ENCODE measurements at regions of chr12 and their contacts with region 1.

Region 1: DNA sequence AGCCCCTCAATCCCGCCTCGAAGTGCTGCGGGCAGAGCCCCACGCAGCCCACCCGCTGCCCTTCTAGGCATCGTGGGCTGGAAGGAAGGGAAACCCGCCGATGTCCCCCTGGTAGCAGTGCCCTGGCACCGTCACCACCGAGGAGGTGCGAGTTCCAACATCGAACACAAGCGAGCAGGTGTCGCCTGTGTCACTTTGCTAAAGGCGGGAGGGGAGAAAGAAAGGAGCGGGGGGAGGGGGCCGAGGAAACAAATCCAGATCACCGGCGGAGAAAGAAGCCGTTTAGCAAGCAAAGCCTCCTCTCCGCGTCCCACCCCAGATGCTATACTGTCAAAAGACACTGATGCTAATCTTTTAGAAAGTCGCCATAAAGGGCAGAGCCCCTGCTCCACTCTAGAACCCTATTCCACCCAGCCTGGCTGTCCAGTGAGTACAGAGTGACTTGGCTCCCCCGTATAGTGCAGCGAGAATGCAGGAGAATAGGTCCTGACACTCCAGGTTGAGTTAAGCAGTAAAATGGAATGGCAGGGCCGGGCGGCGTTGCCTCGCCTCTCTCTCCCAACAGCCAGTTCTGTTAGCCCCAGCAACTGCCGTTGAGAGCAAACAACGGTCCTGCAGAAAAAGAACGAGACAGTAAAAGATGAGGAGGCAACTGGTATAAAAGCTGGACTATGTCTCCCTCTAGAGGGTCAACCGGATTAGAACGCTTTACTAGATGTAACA is 67.9 kb upstream of the USP15 start:
- DNase-seq: peak in 8 of 9 experiments; percentile 4 to 79 (median 40)
- ATAC-seq: peak; percentile 85
- H3K4me3 ChIP-seq: peak overlapping the region; percentile 34 to 65
- H3K4me3 Mint-ChIP-seq: peak overlapping the region; percentile 82
- H3K27ac ChIP-seq: no peak overlapping the region
- H3K27ac Mint-ChIP-seq: no peak overlapping the region
- H3K4me1 ChIP-seq: peaks cover 21% of the 10 kb centered on the region
- H3K4me1 Mint-ChIP-seq: peaks cover 26% of the 10 kb centered on the region
- H3K27me3 ChIP-seq: peaks cover 15 to 18% of the 10 kb centered on the region in 2 experiments
- H3K27me3 Mint-ChIP-seq: peaks cover 33% of the 10 kb centered on the region
- CTCF ChIP-seq: peak; percentile 85

Region 2: DNA sequence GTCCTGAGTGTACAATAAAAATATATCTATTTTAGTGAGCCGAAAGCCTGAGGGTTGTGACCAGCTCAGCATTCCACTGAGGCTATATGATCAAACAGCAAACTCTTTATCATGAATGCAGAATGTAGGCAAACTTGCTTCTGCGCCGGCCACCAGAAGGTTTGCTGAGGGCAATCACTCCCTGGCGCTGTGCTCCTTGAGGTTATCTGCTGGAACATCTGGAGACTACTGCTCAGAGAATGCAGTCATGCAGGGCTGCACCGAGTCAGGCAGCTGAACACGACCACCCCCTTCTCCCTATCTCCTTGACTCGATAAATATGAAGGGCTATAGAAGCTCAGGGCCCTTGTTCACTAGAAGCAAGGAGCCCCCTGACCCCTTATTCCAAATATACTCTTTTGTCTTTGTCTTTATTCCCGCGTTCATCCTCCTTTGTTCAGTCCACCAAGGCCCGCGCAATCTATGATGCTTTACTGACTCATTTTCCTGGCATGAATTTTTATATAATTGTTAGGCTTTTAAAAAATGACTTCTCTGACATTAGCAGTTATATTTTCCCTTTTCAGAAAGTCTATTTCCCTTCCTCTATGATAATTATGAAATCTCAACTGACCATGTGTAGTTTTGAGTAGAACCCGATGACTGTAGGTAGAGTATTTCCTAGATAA is 1507.2 kb before region 1 on chr12:
- CTCF ChIA-PET with region 1: no interaction called
- POLR2A ChIA-PET with region 1: no interaction called
- intact Hi-C with region 1: loop called in 1 of 2 experiments (anchors 5 kb)
- DNase-seq: no peak
- ATAC-seq: no peak
- H3K4me3 ChIP-seq: no peak overlapping the region
- H3K4me3 Mint-ChIP-seq: no peak overlapping the region
- H3K27ac ChIP-seq: no peak overlapping the region
- H3K27ac Mint-ChIP-seq: no peak overlapping the region
- H3K4me1 ChIP-seq: no peaks in the 10 kb centered on the region
- H3K4me1 Mint-ChIP-seq: no peaks in the 10 kb centered on the region
- H3K27me3 ChIP-seq: no peaks in the 10 kb centered on the region
- H3K27me3 Mint-ChIP-seq: no peaks in the 10 kb centered on the region
- CTCF ChIP-seq: no peak

Region 3: GRCh38 chr12:62006076-62006732 is 186.1 kb before region 1 on chr12:
- CTCF ChIA-PET with region 1: no interaction called
- POLR2A ChIA-PET with region 1: no interaction called
- intact Hi-C with region 1: loop called (anchors 1 to 10 kb)
- DNase-seq: peak in 3 of 9 experiments; percentile 18 to 37 (median 25)
- ATAC-seq: no peak
- H3K4me3 ChIP-seq: no peak overlapping the region
- H3K4me3 Mint-ChIP-seq: no peak overlapping the region
- H3K27ac ChIP-seq: no peak overlapping the region
- H3K27ac Mint-ChIP-seq: no peak overlapping the region
- H3K4me1 ChIP-seq: no peaks in the 10 kb centered on the region
- H3K4me1 Mint-ChIP-seq: no peaks in the 10 kb centered on the region
- H3K27me3 ChIP-seq: no peaks in the 10 kb centered on the region
- H3K27me3 Mint-ChIP-seq: peaks cover 2% of the 10 kb centered on the region
- CTCF ChIP-seq: peak; percentile 69

Region 4: DNA sequence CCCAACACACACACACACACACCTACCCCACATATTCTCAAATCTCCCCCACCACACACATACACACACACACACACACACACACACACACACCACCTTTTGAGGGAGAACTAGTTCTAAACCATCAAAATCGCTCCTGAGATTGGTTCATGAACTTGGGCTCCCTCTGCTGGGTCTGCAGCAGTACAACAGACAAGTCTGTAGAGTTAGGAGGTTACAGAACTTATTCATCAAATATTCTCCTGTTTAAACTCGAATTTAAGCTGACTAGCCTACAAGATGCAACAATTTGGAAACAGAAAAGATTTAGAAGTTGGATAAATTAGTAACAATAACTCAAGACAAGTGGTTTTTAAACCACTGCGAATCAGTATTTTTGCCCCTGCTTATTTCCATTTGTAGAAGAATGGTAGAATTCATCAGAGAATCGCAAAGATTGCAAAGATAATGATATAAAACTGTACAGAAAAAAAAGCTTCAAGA is 68.6 kb before region 1 on chr12:
- CTCF ChIA-PET with region 1: no interaction called
- POLR2A ChIA-PET with region 1: no interaction called
- intact Hi-C with region 1: loop called (anchors 2 to 5 kb)
- DNase-seq: peak in 7 of 9 experiments; percentile 1 to 58 (median 35)
- ATAC-seq: peak; percentile 69
- H3K4me3 ChIP-seq: no peak overlapping the region
- H3K4me3 Mint-ChIP-seq: no peak overlapping the region
- H3K27ac ChIP-seq: no peak overlapping the region
- H3K27ac Mint-ChIP-seq: no peak overlapping the region
- H3K4me1 ChIP-seq: no peaks in the 10 kb centered on the region
- H3K4me1 Mint-ChIP-seq: peaks cover 2% of the 10 kb centered on the region
- H3K27me3 ChIP-seq: no peaks in the 10 kb centered on the region
- H3K27me3 Mint-ChIP-seq: peaks cover 5% of the 10 kb centered on the region
- CTCF ChIP-seq: peak; percentile 60

Region 5: DNA sequence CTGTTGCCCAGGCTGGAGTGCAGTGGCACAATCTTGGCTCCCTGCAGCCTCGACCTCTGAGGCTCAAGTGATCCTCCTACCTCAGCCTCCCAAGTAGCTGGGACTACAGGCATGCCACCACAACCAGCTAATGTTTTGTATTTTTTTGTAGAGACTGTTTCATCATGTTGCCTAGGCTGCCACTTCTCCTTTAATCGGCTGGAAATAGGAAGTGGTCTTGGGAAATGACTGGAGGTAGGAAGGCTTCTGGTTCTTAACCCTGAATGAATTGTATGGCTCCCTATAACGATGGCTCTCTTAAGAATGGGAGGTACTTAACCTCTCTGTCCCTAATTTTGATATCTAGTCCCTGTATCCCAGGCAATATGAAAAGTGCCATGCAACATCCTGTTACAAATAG is 46.0 kb before region 1 on chr12:
- CTCF ChIA-PET with region 1: no interaction called
- POLR2A ChIA-PET with region 1: no interaction called
- intact Hi-C with region 1: no loop called
- DNase-seq: no peak
- ATAC-seq: no peak
- H3K4me3 ChIP-seq: no peak overlapping the region
- H3K4me3 Mint-ChIP-seq: no peak overlapping the region
- H3K27ac ChIP-seq: no peak overlapping the region
- H3K27ac Mint-ChIP-seq: no peak overlapping the region
- H3K4me1 ChIP-seq: no peaks in the 10 kb centered on the region
- H3K4me1 Mint-ChIP-seq: no peaks in the 10 kb centered on the region
- H3K27me3 ChIP-seq: no peaks in the 10 kb centered on the region
- H3K27me3 Mint-ChIP-seq: no peaks in the 10 kb centered on the region
- CTCF ChIP-seq: no peak

Region 6: DNA sequence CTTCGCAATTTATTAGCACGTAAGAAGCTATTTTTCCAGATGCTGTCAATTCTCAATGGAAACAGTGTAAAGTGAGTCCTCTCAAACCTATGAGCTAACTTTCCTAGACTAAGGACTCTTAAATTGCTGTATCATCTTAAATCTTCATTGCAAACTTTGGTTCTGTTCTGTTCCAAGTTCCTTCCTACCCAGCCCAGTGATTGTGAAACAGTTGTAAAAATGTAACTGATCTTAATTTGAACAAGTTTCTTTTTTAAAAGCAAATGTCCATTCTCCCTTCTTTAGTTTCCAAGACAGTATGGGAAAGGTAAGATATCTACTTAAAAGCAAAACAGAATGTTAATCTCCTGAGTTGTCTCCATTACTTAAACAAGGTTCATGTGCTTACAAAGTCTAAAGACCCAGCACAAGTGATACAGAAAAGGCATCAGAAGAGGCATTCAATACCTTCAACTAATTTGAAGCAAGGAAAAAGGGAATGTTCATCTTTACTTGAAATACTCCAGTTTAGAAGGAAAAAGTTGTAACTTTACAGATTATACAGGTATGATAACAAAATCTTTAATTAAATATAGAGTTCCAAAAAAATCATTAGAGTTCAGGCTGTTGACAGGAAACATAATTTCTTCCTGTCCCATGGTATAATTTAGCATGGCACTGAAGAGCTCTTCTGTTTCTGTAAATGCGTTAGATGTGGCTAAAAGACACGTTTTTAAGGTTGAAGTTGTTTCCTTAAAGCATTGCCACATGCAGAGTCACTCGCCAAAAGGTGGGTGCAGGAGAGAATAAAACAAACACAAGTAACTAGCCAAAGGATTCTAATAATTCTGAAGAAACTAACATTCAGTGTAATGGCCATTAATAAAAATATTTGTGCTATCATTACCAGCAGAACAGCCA is 33.6 kb before region 1 on chr12:
- CTCF ChIA-PET with region 1: interaction called, 3 read pairs
- POLR2A ChIA-PET with region 1: no interaction called
- intact Hi-C with region 1: loop called in 1 of 2 experiments (anchors 5 kb)
- DNase-seq: peak in 3 of 9 experiments; percentile 17 to 52 (median 22)
- ATAC-seq: peak; percentile 85
- H3K4me3 ChIP-seq: no peak overlapping the region
- H3K4me3 Mint-ChIP-seq: peak overlapping the region; percentile 54
- H3K27ac ChIP-seq: no peak overlapping the region
- H3K27ac Mint-ChIP-seq: peak overlapping the region; percentile 53
- H3K4me1 ChIP-seq: peaks cover 18% of the 10 kb centered on the region
- H3K4me1 Mint-ChIP-seq: peaks cover 39% of the 10 kb centered on the region
- H3K27me3 ChIP-seq: no peaks in the 10 kb centered on the region
- H3K27me3 Mint-ChIP-seq: no peaks in the 10 kb centered on the region
- CTCF ChIP-seq: no peak

Region 7: GRCh38 chr12:62205346-62205745 is 13.0 kb after region 1 on chr12:
- CTCF ChIA-PET with region 1: interaction called, 16 read pairs
- POLR2A ChIA-PET with region 1: no interaction called
- intact Hi-C with region 1: no loop called
- DNase-seq: no peak
- ATAC-seq: no peak
- H3K4me3 ChIP-seq: no peak overlapping the region
- H3K4me3 Mint-ChIP-seq: no peak overlapping the region
- H3K27ac ChIP-seq: no peak overlapping the region
- H3K27ac Mint-ChIP-seq: no peak overlapping the region
- H3K4me1 ChIP-seq: no peaks in the 10 kb centered on the region
- H3K4me1 Mint-ChIP-seq: no peaks in the 10 kb centered on the region
- H3K27me3 ChIP-seq: no peaks in the 10 kb centered on the region
- H3K27me3 Mint-ChIP-seq: no peaks in the 10 kb centered on the region
- CTCF ChIP-seq: no peak

Region 8: DNA sequence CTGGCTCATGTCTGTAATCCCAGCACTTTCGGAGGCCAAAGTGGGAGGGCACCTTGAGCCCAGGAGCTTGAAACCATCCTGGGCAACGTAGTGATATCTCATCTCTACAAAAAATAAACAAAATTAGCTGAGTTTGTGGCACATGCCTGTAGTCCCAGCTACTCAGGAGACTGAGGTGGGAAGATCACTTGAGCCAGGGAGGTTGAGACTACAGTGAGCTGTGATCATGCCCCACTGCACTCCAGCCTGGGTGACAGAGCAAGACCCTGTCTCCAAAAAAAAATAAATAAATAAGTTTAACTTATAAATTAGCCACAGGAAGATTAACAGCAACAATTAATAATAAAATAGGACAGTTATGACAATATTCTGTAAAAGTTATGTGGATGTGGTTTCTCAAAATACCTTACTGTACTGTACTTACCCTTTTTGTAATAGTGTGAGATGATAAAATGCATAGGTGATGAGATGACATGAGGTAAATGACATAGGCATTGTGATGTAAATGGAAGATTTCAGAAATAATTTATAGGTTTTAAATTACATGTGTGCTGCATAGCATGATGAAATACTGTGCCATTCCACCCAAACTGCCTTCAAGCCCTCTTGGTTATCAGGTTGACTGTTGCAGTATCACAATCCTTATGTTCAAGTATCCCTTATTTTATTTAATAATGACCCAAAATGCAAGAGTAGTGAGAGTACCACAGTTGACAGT is 89.9 kb after region 1 on chr12:
- CTCF ChIA-PET with region 1: no interaction called
- POLR2A ChIA-PET with region 1: no interaction called
- intact Hi-C with region 1: no loop called
- DNase-seq: no peak
- ATAC-seq: no peak
- H3K4me3 ChIP-seq: no peak overlapping the region
- H3K4me3 Mint-ChIP-seq: no peak overlapping the region
- H3K27ac ChIP-seq: no peak overlapping the region
- H3K27ac Mint-ChIP-seq: no peak overlapping the region
- H3K4me1 ChIP-seq: peaks cover 30% of the 10 kb centered on the region
- H3K4me1 Mint-ChIP-seq: peaks cover 81% of the 10 kb centered on the region
- H3K27me3 ChIP-seq: no peaks in the 10 kb centered on the region
- H3K27me3 Mint-ChIP-seq: no peaks in the 10 kb centered on the region
- CTCF ChIP-seq: no peak